Activated CD4-positive, alpha-beta memory T cell treated with anti-CD3 and anti-CD28 coated beads for 36 hours (primary cell): ENCODE measurements at regions of chr1 and their contacts with region 1.

Region 1: DNA sequence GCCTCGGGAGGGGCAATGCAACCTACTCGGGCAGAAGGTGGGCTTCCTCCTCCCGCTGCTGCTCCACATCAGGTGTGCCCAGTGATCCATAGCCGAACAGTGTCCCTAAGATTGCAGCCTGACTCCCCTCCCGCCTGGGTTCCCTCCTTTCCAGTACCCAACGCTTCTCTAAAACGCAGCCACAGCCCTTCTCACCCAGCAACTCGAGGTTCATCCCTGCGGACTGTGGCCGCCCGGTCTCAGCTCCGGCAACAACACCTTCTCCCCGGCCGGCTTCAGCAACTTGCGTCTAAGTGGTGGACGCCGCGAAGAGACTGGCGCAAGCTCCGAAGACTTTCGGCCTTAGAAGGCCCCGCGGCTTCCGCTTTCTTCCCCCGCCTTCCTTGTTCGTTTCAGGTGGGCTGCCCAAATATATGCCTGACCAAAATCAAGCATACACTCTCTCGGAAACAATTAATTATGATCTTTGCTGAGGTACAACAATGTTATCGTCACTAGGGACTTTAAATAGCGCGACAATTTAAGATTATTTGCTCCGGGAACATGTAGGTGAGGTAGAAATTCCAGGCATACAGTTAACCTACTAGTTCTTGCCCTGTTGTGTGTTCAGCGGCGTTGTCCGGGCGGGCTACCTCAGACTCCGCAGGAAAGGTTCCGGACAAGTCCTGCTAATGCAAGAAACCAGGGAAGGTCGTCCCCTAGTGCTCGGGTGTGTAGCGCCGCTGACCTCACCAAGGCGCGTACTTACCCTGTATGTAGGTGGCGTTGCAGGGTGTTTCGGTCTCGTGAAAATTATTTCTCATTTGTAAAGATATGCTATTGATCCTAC is at the start of gene RBBP5:
- DNase-seq: peak; percentile 97
- H3K4me3 Mint-ChIP-seq: peak within 1 kb of the TSS; percentile 98
- H3K27ac Mint-ChIP-seq: peak within 1 kb of the TSS; percentile 98
- H3K4me1 Mint-ChIP-seq: peaks cover 34% of the 10 kb centered on the region
- H3K27me3 Mint-ChIP-seq: no peaks in the 10 kb centered on the region
- total RNA-seq, gene RBBP5: 23.5 to 25.9 TPM

Region 2: DNA sequence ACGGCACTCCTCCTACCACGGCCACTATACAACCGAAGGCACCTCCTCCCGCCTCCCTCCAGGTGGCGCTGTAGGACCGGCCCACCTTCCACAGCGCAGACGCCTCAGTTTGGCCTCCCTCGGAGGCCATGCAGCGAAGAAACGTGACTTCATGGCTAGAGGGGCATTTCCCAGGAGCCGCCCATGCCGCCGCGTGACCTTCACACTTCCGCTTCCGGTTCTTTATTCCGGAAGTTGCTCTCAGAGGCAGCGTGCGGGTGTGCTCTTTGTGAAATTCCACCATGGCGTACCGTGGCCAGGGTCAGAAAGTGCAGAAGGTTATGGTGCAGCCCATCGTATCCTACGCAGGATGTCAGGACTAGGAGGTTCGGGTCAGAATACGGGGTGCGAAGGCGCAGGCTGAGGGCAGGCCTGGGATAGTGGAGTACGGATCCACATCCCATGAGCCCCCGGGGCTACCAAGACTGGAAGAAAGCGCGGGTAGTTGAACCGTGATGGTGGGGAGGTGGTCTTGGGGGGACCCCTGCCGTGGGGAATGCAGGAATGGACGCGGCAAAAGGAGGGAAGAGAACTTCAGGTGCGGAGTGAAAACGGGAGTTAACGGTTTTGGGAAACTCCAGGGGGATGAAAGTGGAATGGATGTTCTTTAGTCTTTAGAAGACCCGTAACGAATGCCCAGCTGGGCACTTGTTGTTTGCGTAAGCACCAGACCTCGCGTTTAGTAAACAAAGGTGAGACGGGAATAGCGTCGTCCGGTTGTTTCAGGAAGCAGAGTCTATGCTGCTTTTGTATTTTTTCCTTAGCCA is 1260.3 kb before region 1 on chr1 and contains the start of gene SNRPE:
- CTCF ChIA-PET with region 1: no interaction called
- POLR2A ChIA-PET with region 1: no interaction called
- intact Hi-C with region 1: loop called (anchors 10 kb)
- DNase-seq: peak; percentile 98
- H3K4me3 Mint-ChIP-seq: peak within 1 kb of the TSS; percentile 93
- H3K27ac Mint-ChIP-seq: peak within 1 kb of the TSS; percentile 90
- H3K4me1 Mint-ChIP-seq: peaks cover 10% of the 10 kb centered on the region
- H3K27me3 Mint-ChIP-seq: no peaks in the 10 kb centered on the region
- total RNA-seq, gene SNRPE: 327 to 339 TPM

Region 3: GRCh38 chr1:205172729-205173366 is 51.0 kb after region 1 on chr1:
- CTCF ChIA-PET with region 1: no interaction called
- POLR2A ChIA-PET with region 1: interaction called, 4 read pairs
- intact Hi-C with region 1: loop called (anchors 5 kb)
- DNase-seq: peak; percentile 31
- H3K4me3 Mint-ChIP-seq: no peak overlapping the region
- H3K27ac Mint-ChIP-seq: peak overlapping the region; percentile 64
- H3K4me1 Mint-ChIP-seq: peaks cover 24% of the 10 kb centered on the region
- H3K27me3 Mint-ChIP-seq: no peaks in the 10 kb centered on the region

Region 4: GRCh38 chr1:205284343-205285144 is 162.7 kb after region 1 on chr1:
- CTCF ChIA-PET with region 1: no interaction called
- POLR2A ChIA-PET with region 1: interaction called, 3 read pairs
- intact Hi-C with region 1: loop called (anchors 5 kb)
- DNase-seq: peak; percentile 95
- H3K4me3 Mint-ChIP-seq: peak overlapping the region; percentile 38
- H3K27ac Mint-ChIP-seq: peak overlapping the region; percentile 68
- H3K4me1 Mint-ChIP-seq: peaks cover 77% of the 10 kb centered on the region
- H3K27me3 Mint-ChIP-seq: no peaks in the 10 kb centered on the region

Region 5: GRCh38 chr1:205631727-205632373 is 510.0 kb after region 1 on chr1 and contains the start of gene ELK4:
- CTCF ChIA-PET with region 1: no interaction called
- POLR2A ChIA-PET with region 1: no interaction called
- intact Hi-C with region 1: loop called (anchors 5 kb)
- DNase-seq: peak; percentile 100
- H3K4me3 Mint-ChIP-seq: peak within 1 kb of the TSS; percentile 85
- H3K27ac Mint-ChIP-seq: peak within 1 kb of the TSS; percentile 90
- H3K4me1 Mint-ChIP-seq: peaks cover 34% of the 10 kb centered on the region
- H3K27me3 Mint-ChIP-seq: no peaks in the 10 kb centered on the region
- total RNA-seq, gene ELK4: 60.7 to 65.8 TPM

Region 6: GRCh38 chr1:205775015-205775716 is 653.3 kb after region 1 on chr1 and contains the start of gene RAB29:
- CTCF ChIA-PET with region 1: no interaction called
- POLR2A ChIA-PET with region 1: no interaction called
- intact Hi-C with region 1: loop called (anchors 10 kb)
- DNase-seq: peak; percentile 91
- H3K4me3 Mint-ChIP-seq: peak within 1 kb of the TSS; percentile 84
- H3K27ac Mint-ChIP-seq: peak within 1 kb of the TSS; percentile 94
- H3K4me1 Mint-ChIP-seq: peaks cover 52% of the 10 kb centered on the region
- H3K27me3 Mint-ChIP-seq: no peaks in the 10 kb centered on the region
- total RNA-seq, gene RAB29: 31.5 to 31.6 TPM